ENCODE measurements at regions of chr4 and their contacts with region 1.

Region 1: DNA sequence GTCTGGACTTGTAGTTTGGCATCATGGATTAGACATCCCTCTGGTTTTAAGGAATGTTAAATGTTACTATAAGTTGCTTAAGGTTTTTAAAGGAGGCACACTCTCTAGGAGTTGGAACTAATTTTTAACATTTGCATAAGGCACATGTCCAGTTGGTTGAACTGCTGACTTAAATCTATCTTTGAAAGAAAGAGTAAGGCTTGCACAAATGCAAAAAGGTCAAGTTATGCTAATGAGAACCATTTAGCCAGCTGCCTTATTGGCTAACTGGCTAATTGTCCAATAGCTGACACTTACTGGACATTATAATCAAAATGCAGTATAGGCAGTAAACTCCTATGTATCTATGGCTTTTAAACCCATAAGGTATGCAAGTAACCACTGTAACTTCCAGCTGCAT is 206.1 kb upstream of the TTC29 start:
- DNase-seq: no peak
- ATAC-seq: no peak
- H3K4me3 ChIP-seq: no peak overlapping the region
- H3K4me3 Mint-ChIP-seq: no peak overlapping the region
- H3K27ac ChIP-seq: no peak overlapping the region
- H3K27ac Mint-ChIP-seq: no peak overlapping the region
- H3K4me1 ChIP-seq: no peaks in the 10 kb centered on the region
- H3K4me1 Mint-ChIP-seq: no peaks in the 10 kb centered on the region
- H3K27me3 ChIP-seq: no peaks in the 10 kb centered on the region
- H3K27me3 Mint-ChIP-seq: peaks cover 15% of the 10 kb centered on the region
- CTCF ChIP-seq: no peak

Region 2: DNA sequence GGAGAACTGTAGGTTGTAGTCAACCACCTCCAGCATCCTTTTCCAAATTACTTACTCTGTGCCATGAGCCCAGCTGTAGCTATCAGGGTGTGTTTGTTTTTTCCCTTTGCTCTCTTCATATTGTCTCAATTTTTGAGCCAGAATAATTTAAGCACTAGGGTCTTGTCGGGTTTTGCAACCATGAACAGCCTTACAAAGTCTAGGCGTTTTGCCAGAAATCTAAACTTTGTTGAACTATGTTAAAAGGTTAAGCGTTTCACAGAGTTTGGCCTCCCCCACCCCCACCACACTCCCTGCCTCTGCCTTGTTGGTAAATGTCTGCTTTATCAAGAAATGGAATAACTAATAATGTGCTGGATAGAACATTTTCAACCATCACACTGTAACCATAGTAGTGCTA is 15.5 kb before region 1 on chr4:
- CTCF ChIA-PET with region 1: no interaction called
- POLR2A ChIA-PET with region 1: no interaction called
- intact Hi-C with region 1: no loop called
- DNase-seq: no peak
- ATAC-seq: no peak
- H3K4me3 ChIP-seq: no peak overlapping the region
- H3K4me3 Mint-ChIP-seq: no peak overlapping the region
- H3K27ac ChIP-seq: no peak overlapping the region
- H3K27ac Mint-ChIP-seq: no peak overlapping the region
- H3K4me1 ChIP-seq: no peaks in the 10 kb centered on the region
- H3K4me1 Mint-ChIP-seq: no peaks in the 10 kb centered on the region
- H3K27me3 ChIP-seq: no peaks in the 10 kb centered on the region
- H3K27me3 Mint-ChIP-seq: no peaks in the 10 kb centered on the region
- CTCF ChIP-seq: no peak

Region 3: GRCh38 chr4:147198411-147199051 is 46.8 kb after region 1 on chr4:
- CTCF ChIA-PET with region 1: no interaction called
- POLR2A ChIA-PET with region 1: no interaction called
- intact Hi-C with region 1: no loop called
- DNase-seq: no peak
- ATAC-seq: no peak
- H3K4me3 ChIP-seq: no peak overlapping the region
- H3K4me3 Mint-ChIP-seq: no peak overlapping the region
- H3K27ac ChIP-seq: no peak overlapping the region
- H3K27ac Mint-ChIP-seq: no peak overlapping the region
- H3K4me1 ChIP-seq: no peaks in the 10 kb centered on the region
- H3K4me1 Mint-ChIP-seq: no peaks in the 10 kb centered on the region
- H3K27me3 ChIP-seq: peaks cover 0 to 4% of the 10 kb centered on the region in 2 experiments
- H3K27me3 Mint-ChIP-seq: peaks cover 2% of the 10 kb centered on the region
- CTCF ChIP-seq: no peak

Region 4: GRCh38 chr4:147220833-147221232 is 69.1 kb after region 1 on chr4:
- CTCF ChIA-PET with region 1: no interaction called
- POLR2A ChIA-PET with region 1: no interaction called
- intact Hi-C with region 1: loop called in 1 of 2 experiments (anchors 2 kb)
- DNase-seq: no peak
- ATAC-seq: no peak
- H3K4me3 ChIP-seq: no peak overlapping the region
- H3K4me3 Mint-ChIP-seq: no peak overlapping the region
- H3K27ac ChIP-seq: no peak overlapping the region
- H3K27ac Mint-ChIP-seq: no peak overlapping the region
- H3K4me1 ChIP-seq: no peaks in the 10 kb centered on the region
- H3K4me1 Mint-ChIP-seq: no peaks in the 10 kb centered on the region
- H3K27me3 ChIP-seq: no peaks in the 10 kb centered on the region
- H3K27me3 Mint-ChIP-seq: no peaks in the 10 kb centered on the region
- CTCF ChIP-seq: no peak

Measured in CD8-positive, alpha-beta T cell (primary cell).